ENCODE measurements at regions of chr3 and their contacts with region 1.

Region 1: GRCh38 chr3:52286777-52287110 is 884 bp upstream of the GLYCTK start:
- DNase-seq: peak; percentile 67
- H3K4me3 ChIP-seq: peak overlapping the region; percentile 76 to 89 (median 84)
- H3K27ac ChIP-seq: peak overlapping the region; percentile 97 to 99 (median 99)
- H3K4me1 ChIP-seq: peaks cover 0 to 17% (median 10%) of the 10 kb centered on the region in 4 donors
- H3K27me3 ChIP-seq: no peaks in the 10 kb centered on the region
- CTCF ChIP-seq: no peak
- EP300 ChIP-seq: no peak
- POLR2A ChIP-seq: no peak

Region 2: DNA sequence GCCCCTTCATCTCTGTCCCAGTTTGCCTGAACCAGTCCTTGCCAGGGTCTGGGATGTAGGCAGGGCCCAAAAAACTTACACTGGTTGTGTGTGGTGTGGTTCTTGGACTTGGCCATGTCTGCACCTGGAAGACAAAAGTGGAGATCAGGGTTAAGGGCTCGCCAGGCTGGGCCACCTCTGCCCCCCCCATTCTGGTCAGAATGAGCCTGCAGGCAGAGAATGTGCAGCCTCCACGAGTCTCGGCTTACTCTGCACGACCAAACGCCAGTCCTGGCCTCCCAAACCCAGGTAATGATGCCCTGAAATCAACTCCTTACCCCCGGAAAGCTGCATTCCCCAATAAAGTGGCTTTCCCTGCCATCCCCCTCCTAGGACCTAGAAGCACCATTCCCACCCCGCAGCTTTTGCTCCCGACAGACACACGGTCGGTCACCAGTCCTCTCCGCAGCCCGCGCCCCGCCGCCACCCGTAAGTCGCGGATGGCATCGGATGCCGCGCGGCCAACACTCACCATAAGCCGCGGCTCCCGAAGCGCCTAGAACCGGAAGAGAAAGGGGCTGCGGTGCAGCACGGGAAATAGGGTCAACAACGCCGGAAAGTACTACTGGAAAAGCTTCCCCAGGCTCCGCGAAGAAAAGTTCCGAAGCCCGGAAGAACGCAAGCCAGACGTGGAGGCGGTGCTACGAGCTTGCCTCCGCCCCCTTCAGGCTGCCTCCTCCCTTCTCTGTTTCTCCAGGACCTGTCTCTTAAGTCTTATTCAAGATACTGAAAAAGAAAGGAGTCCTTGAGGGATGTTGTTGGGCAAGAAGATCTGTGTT is 291.2 kb before region 1 on chr3 and contains the start of gene RPL29:
- intact Hi-C with region 1: loop called (anchors 5 kb)
- DNase-seq: peak; percentile 97
- H3K4me3 ChIP-seq: peak within 1 kb of the TSS; percentile 60 to 73 (median 64)
- H3K27ac ChIP-seq: peak within 1 kb of the TSS; percentile 82 to 85 (median 84)
- H3K4me1 ChIP-seq: peaks cover 0 to 19% (median 16%) of the 10 kb centered on the region in 4 donors
- H3K27me3 ChIP-seq: peaks cover 0 to 12% (median 0%) of the 10 kb centered on the region in 3 donors
- CTCF ChIP-seq: peak in 1 of 4 experiments; percentile 7
- EP300 ChIP-seq: peak in 1 of 4 donors; percentile 30
- POLR2A ChIP-seq: peak; percentile 48 to 61
- total RNA-seq, gene RPL29: 1,247 to 2,632 (median 2,024) TPM

Region 3: DNA sequence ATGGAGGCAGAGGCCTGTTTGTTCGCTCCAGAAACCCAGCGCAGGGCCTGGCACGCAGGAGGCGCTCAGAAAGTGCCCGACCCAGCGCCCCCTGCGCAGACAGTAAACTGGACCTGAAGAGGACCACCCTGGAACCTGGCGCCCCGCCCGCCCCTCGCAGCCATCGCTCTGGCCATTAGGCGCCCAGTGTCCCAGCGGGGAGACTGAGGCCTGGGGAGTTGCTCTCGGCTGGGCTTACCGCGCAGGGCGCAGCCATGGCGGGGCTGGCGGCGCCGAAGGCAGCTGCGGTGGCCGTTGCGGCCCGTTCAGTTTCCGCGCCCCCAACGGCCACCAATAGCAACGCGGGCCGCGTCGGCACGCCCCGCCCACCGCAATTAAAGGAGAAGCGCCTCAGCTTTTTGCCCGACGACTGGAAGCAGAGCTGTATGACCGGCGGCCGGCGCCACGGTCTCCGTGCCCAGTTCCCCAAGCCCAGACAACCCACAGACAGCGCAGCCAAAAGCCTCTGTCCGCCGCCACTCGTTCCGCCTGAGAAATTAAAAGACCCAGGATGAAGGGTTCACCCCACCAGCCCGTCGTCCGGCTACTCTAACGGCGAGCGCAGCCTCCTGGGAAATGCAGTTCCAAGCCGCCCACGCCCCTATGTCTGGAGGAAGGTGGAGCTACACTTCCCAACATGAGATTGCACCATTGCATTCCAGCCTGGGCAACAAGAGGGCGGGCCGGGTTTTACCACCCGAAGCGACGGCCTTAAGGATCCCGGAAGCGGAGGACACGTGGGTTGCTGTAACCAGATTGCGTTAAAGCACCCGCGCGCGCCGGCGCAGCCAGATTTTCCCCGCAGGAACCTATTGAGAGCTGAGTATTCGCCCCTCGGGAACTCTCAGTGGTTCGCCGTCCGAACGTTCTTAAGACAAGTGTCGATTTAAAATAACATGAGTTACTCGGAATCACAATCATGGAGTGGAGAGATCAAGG is 132.3 kb before region 1 on chr3 and contains the start of gene POC1A:
- intact Hi-C with region 1: loop called (anchors 2 kb)
- DNase-seq: peak; percentile 99
- H3K4me3 ChIP-seq: peak within 1 kb of the TSS; percentile 47 to 65 (median 60)
- H3K27ac ChIP-seq: peak within 1 kb of the TSS; percentile 85 to 92 (median 86)
- H3K4me1 ChIP-seq: peaks cover 0 to 17% (median 14%) of the 10 kb centered on the region in 4 donors
- H3K27me3 ChIP-seq: no peaks in the 10 kb centered on the region
- CTCF ChIP-seq: peak in 3 of 4 experiments; percentile 20 to 40 (median 36)
- EP300 ChIP-seq: peak in 1 of 4 donors; percentile 56
- POLR2A ChIP-seq: peak in 1 of 2 donors; percentile 33
- total RNA-seq, gene POC1A: 0.66 to 1.7 (median 1.2) TPM